ENCODE measurements at regions of chr20 and their contacts with region 1.

Region 1: GRCh38 chr20:44388466-44389023 is 33.0 kb downstream of the HNF4A start:
- DNase-seq: peak; percentile 82

Region 2: DNA sequence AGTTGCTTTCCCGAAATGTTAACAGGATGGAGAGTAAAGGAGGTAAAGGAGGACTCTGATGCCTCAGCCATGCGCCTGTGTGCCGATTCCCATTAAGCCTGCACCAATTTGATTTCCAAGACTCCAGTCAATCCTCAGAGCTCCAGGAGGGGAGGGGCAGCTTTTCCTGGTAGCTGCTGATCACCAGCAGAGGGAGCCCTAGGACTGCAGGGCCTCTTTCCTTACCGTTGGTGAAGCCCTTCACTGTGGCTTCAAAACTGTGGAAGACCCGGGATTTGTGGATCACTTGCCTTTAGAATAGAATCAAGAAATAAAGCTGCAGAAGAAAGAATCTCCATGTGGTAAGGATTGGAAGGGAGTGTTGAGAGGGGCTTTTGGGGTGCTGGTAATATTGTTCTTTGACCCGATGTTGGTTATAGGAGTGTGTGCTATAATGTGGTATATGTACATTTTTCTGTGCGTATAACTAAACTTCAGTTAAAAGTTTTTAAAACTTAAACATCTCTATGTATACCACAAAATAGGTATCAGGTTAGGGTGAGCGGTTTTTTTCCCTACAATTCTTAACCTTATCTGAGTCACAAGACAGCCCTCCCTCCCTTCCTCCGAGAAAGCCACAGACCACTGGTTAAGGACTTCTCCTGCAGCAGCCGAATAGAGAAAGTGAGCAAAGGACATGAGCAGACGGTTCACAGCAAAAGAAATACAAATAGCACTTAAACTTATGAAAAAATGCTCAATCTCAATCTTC is 171.0 kb before region 1 on chr20:
- intact Hi-C with region 1: loop called (anchors 2 kb)
- DNase-seq: peak; percentile 85

Region 3: GRCh38 chr20:44310664-44311639 is 77.6 kb before region 1 on chr20 and contains the start of gene FITM2:
- intact Hi-C with region 1: loop called (anchors 2 kb)
- DNase-seq: peak; percentile 99
- total RNA-seq, gene FITM2: 94.0 TPM

Region 4: GRCh38 chr20:44407402-44408184 is 19.0 kb after region 1 on chr20:
- intact Hi-C with region 1: no loop called
- DNase-seq: no peak

Region 5: DNA sequence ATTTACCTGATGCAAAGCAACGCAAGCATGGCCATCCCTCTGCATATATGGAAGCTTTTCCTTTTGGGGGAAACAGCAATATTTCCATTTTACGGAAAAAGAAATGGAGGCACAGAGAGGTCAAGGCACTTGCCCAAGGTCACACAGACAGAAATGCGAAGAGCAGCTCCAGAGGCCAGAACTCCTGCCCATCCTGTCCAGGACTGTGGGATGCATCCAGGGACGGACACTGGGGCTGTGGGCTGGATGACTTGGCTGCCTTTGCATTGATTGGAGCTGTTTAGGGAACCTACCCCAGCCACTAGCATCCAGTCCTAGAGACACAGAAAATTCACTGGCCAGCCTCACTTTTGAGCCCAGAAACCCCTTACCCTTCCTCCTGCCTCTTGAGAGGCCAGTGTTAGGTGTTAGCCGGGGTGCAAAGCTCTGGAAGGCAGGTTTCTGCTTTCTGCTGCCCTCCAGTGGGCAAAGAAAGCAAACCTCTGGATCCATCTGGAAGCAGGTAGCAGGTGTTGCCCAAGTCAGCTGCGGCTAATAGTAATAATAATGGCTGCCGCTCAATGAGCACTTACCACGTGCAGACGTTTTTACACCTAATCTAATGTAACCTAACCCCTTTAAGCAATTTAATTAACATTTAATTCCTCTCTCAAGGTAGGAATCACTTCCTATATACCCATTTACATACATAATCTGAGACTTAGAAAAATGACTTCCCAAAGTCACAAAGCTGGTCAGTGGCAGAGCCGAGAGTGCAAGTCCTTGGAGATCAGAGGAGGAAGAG is 294.9 kb after region 1 on chr20:
- intact Hi-C with region 1: loop called (anchors 5 kb)
- DNase-seq: no peak

Region 6: GRCh38 chr20:44733341-44734069 is 345.0 kb after region 1 on chr20:
- intact Hi-C with region 1: loop called (anchors 10 kb)
- DNase-seq: no peak